HCT116 (cell line): ENCODE measurements at regions of chr7 and their contacts with region 1.

Region 1: GRCh38 chr7:64618785-64619456 is 47.0 kb upstream of the ZNF107 start:
- DNase-seq: peak; percentile 59
- ATAC-seq: peak; percentile 78
- H3K4me3 ChIP-seq: no peak overlapping the region
- H3K27ac ChIP-seq: no peak overlapping the region
- H3K4me1 ChIP-seq: no peaks in the 10 kb centered on the region
- H3K27me3 ChIP-seq: no peaks in the 10 kb centered on the region
- CTCF ChIP-seq: peak; percentile 10 to 79 (median 44); a peak in 3 of 6 replicates
- POLR2A ChIP-seq: no peak
- RAD21 ChIP-seq: peak; percentile 72

Region 2: DNA sequence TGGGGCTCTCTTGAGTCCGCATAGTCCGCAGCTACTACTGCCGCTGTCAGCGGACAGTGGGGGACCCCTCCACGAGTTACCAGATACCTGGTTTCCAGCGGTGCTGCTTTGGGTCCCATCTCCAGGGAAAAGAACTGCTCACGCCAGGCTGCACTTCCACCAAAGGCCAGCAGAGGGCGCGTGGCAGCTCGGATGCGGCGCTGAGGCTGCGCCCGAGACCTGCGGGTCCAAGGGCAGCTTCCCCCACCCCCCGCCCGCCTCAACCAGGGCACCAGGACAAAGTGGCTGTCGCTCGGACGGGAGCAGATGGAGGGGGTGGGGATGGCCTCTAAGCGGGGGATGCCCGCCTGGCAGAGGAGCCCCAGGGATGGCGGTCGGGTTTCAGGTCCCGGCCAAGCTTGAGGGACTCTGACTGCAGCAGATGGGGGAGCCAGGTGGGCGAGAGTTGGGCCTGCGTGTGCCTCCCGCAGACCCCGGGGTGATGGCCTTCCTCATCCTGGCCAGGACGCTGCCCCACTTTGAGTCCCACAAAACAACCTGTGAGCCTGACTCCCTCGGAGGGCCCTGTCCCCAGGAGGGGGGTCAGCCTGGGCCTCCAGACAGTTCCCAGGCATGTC is 435.7 kb before region 1 on chr7:
- CTCF ChIA-PET with region 1: no interaction called
- POLR2A ChIA-PET with region 1: no interaction called
- RAD21 ChIA-PET with region 1: no interaction called
- intact Hi-C with region 1: loop called (anchors 5 kb)
- DNase-seq: no peak
- ATAC-seq: no peak
- H3K4me3 ChIP-seq: no peak overlapping the region
- H3K27ac ChIP-seq: no peak overlapping the region
- H3K4me1 ChIP-seq: no peaks in the 10 kb centered on the region
- H3K27me3 ChIP-seq: no peaks in the 10 kb centered on the region
- CTCF ChIP-seq: peak in 2 of 3 experiments; percentile 52 to 55; a peak in 4 of 6 replicates
- POLR2A ChIP-seq: no peak
- RAD21 ChIP-seq: no peak

Region 3: GRCh38 chr7:64562626-64563275 is 56.2 kb before region 1 on chr7 and contains the start of gene ZNF680:
- CTCF ChIA-PET with region 1: no interaction called
- POLR2A ChIA-PET with region 1: no interaction called
- RAD21 ChIA-PET with region 1: no interaction called
- intact Hi-C with region 1: no loop called
- DNase-seq: peak; percentile 91
- ATAC-seq: peak; percentile 99
- H3K4me3 ChIP-seq: peak within 1 kb of the TSS; percentile 91 to 93
- H3K27ac ChIP-seq: peak within 1 kb of the TSS; percentile 75
- H3K4me1 ChIP-seq: peaks cover 0 to 5% of the 10 kb centered on the region in 2 experiments; a peak in 1 of 4 replicates
- H3K27me3 ChIP-seq: no peaks in the 10 kb centered on the region
- CTCF ChIP-seq: no peak
- POLR2A ChIP-seq: peak; percentile 78
- RAD21 ChIP-seq: no peak
- total RNA-seq, gene ZNF680: 11.2 TPM